PC-9 (cell line): ENCODE measurements at regions of chr18 and their contacts with region 1.

Region 1: DNA sequence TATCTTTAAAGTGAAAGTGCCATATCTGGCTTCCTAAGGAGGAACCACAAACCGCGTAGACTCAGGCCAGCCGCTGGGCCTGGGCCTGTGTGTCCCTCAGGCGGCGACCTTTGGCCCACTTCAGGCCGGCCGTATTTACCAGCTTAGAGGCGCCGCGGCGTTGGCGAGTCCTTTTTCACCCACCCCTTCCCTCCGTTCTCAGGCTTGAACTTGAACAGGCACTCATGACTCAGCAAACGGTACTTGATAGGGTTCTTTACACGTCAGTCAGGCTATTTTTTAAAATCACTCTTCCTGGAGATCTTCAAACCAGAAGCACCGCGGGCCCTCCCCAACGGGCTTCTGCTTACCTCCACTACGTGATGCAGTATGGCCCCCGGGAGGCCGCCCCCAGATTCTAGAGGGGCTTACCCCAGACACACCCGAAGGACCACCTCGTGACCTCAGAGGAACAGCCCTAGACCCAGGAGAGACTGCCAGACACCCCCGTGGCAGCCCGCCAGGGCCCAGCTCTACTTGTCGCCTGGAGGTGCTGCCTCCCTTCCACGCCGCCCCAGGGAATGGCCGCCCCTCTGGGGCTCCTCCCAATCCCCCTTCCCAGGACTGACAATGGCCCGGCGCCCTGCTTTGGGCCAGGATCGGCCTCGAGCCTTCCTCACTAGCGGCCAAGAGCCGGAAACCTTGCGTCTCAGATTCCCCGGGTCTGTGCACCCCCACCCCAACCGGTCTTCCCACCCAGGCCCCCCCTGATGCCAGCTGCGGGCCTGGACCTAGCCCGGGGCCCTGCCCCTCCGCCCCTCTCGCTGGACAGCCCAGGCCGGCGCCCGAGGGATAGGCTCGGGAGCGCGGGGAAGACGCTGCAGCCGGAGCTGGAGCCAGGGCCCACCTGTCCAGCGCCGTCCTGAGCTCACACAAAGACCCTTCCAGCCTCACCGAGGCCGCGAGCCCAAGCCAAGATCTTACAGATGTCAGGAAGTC is 33.8 kb upstream of the IMPA2 start:
- DNase-seq: peak; percentile 96 to 97
- H3K4me3 ChIP-seq: peak overlapping the region; percentile 88
- H3K27ac ChIP-seq: peak overlapping the region; percentile 99
- H3K4me1 ChIP-seq: peaks cover 34% of the 10 kb centered on the region
- H3K27me3 ChIP-seq: no peaks in the 10 kb centered on the region
- CTCF ChIP-seq: no peak

Region 2: DNA sequence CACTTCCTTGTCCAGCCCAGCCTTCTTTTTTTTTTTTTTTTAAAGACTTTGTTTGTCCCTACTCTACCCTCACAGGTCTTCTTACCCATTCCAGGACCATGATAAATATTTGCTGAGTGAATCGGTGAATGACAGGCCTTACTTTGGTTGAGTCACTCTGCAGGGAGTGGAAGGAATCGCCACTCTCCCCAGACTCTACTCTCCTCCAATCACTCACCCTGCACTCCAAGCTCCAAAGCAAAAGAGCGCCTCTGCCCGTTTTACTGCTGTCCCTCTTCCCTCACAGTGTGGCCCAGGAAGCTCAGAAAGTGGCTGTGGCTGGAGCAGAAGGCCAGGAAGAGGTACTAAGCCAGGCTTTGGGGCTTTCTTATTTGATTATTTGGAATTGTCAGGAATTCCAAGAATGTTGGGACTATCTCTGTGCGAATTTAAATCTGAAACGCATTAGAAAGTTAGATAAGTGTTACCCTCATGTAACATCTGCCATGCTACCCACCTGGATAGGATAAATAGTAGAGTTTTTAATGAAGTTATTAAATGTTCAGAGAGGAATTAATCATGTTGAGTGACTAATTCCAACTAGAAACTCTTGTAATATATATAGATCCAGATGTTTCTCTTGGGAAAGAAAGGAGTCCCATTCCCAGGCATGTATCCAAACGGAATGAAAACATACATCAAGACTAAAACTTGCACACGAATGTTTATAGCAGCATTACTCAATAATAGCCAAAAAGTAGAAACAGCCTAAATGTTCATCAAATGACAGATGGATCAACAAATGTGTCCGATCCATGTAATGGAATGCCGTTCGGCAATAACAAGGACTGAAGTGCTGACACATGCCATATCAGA is 139.3 kb before region 1 on chr18:
- CTCF ChIA-PET with region 1: no interaction called
- POLR2A ChIA-PET with region 1: no interaction called
- intact Hi-C with region 1: no loop called
- DNase-seq: peak; percentile 53 to 92
- H3K4me3 ChIP-seq: no peak overlapping the region
- H3K27ac ChIP-seq: peak overlapping the region; percentile 79
- H3K4me1 ChIP-seq: peaks cover 27% of the 10 kb centered on the region
- H3K27me3 ChIP-seq: no peaks in the 10 kb centered on the region
- CTCF ChIP-seq: no peak

Region 3: GRCh38 chr18:11857177-11857887 is 90.2 kb before region 1 on chr18:
- CTCF ChIA-PET with region 1: interaction called, 3 read pairs
- POLR2A ChIA-PET with region 1: interaction called, 11 read pairs
- intact Hi-C with region 1: loop called (anchors 1 kb)
- DNase-seq: peak; percentile 87 to 97
- H3K4me3 ChIP-seq: peak overlapping the region; percentile 43; the same call in 1 of the 2 replicates
- H3K27ac ChIP-seq: peak overlapping the region; percentile 97
- H3K4me1 ChIP-seq: peaks cover 62% of the 10 kb centered on the region
- H3K27me3 ChIP-seq: no peaks in the 10 kb centered on the region
- CTCF ChIP-seq: no peak

Region 4: GRCh38 chr18:11887305-11888262 is 59.9 kb before region 1 on chr18:
- CTCF ChIA-PET with region 1: no interaction called
- POLR2A ChIA-PET with region 1: interaction called, 7 read pairs
- intact Hi-C with region 1: loop called (anchors 2 kb)
- DNase-seq: peak; percentile 61 to 95
- H3K4me3 ChIP-seq: no peak overlapping the region
- H3K27ac ChIP-seq: peak overlapping the region; percentile 60
- H3K4me1 ChIP-seq: peaks cover 24% of the 10 kb centered on the region
- H3K27me3 ChIP-seq: no peaks in the 10 kb centered on the region
- CTCF ChIP-seq: no peak

Region 5: GRCh38 chr18:11908182-11909060 is 39.1 kb before region 1 on chr18 and contains the start of gene MPPE1:
- CTCF ChIA-PET with region 1: no interaction called
- POLR2A ChIA-PET with region 1: interaction called, 13 read pairs
- intact Hi-C with region 1: loop called (anchors 2 kb)
- DNase-seq: peak; percentile 71 to 89
- H3K4me3 ChIP-seq: peak within 1 kb of the TSS; percentile 84
- H3K27ac ChIP-seq: peak within 1 kb of the TSS; percentile 72
- H3K4me1 ChIP-seq: peaks cover 15% of the 10 kb centered on the region
- H3K27me3 ChIP-seq: no peaks in the 10 kb centered on the region
- CTCF ChIP-seq: no peak
- total RNA-seq, gene MPPE1: 40.7 and 54.9 TPM in 2 replicates

Region 6: DNA sequence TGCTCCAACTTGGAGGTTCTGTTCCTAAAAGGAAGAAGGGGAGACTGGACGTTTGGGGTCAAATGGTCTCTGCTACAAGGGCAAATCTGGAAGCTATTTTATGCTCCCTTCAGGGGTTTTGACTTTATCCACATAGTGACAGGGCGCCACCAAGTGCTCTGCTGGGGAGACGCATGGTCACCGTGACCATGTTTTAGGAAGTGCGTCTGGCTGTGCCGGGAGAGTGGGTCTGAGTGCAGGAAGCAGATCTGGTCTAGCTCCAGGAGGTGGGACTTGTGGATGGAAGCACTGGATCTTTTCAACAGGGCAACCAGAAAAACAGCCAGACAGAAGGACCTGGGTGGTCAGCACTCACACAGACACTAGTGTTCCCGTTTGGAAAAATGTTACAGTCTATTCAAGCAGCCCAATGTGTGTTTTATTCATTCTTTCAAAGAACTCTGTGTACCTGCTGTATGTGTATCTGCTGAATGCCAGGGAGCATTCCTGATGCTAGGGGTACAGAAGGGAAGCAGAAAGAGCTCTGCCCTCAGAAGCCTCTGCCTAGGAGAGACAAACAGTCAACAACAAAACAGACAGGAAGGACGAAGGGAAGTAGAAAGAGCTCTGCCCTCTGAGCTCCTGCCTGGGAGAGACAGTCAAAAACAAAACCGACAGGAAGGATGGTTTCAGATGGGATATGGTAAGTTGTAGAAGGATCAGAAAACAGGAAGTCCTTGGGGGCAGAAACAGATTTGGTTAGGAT is 48.1 kb after region 1 on chr18:
- CTCF ChIA-PET with region 1: interaction called, 4 read pairs
- POLR2A ChIA-PET with region 1: interaction called, 4 read pairs
- intact Hi-C with region 1: loop called (anchors 2 kb)
- DNase-seq: peak; percentile 49 to 70
- H3K4me3 ChIP-seq: no peak overlapping the region
- H3K27ac ChIP-seq: no peak overlapping the region
- H3K4me1 ChIP-seq: peaks cover 17% of the 10 kb centered on the region
- H3K27me3 ChIP-seq: no peaks in the 10 kb centered on the region
- CTCF ChIP-seq: peak; percentile 84

Region 7: GRCh38 chr18:12308386-12309100 is 361.0 kb after region 1 on chr18:
- CTCF ChIA-PET with region 1: no interaction called
- POLR2A ChIA-PET with region 1: no interaction called
- intact Hi-C with region 1: no loop called
- DNase-seq: peak; percentile 37 to 75
- H3K4me3 ChIP-seq: peak overlapping the region; percentile 87
- H3K27ac ChIP-seq: no peak overlapping the region
- H3K4me1 ChIP-seq: 0 out of 2 replicates have a peak, but pooled peaks cover 6% of the 10 kb centered on the region
- H3K27me3 ChIP-seq: no peaks in the 10 kb centered on the region
- CTCF ChIP-seq: no peak